ENCODE measurements at regions of chr17 and their contacts with region 1.

Region 1: DNA sequence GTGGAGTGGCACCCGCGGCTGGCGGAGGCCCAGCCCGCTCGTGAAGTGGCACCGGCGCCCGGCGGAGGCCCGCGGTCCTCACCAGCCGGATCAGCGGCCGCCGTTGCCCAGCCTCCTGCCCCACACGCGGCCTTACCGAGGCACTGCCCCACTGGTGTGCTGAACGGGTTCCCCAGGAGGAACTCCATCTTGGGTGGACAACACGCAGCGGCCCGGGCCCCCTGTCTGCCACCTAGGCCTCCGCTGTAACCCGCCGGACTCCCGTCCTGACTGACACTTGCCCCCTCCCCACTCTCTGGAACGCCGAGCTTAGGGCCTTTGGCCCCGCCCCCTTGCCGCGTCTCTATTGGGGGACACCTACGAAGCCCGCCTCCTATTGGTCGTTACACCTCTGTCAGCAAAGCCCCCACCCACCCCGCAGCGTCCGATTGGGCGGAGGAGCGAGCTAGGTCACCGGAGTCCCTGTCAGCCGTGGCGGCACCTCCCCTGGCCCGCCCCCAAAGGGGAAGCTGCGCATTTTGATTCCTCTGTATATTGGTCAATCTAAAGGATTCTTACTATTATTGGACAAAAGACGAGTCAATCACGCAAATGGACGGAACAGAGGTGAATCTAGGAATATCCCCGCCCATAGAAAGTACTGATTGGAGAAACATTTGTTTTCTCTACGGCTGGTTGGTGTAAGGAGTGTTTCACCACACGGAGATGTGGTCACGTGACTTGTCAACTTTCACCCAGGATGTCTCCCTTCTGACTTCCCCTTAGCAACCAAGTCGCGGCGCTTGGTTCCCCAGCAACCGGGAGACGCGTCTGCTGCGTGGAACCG is at the starts of genes DRC3 and TOM1L2:
- DNase-seq: peak; percentile 100
- H3K4me3 ChIP-seq: peak within 1 kb of the TSS; percentile 82
- H3K27ac ChIP-seq: peak within 1 kb of the TSS; percentile 40
- H3K4me1 ChIP-seq: peaks cover 28% of the 10 kb centered on the region
- H3K27me3 ChIP-seq: no peaks in the 10 kb centered on the region
- CTCF ChIP-seq: no peak
- total RNA-seq, gene DRC3: 7.2 and 15.2 TPM in 2 replicates
- total RNA-seq, gene TOM1L2: 68.5 and 71.8 TPM in 2 replicates

Region 2: GRCh38 chr17:17737961-17738894 is 234.1 kb before region 1 on chr17:
- CTCF ChIA-PET with region 1: no interaction called
- POLR2A ChIA-PET with region 1: interaction called, 10 read pairs
- intact Hi-C with region 1: no loop called
- DNase-seq: peak; percentile 68 to 94
- H3K4me3 ChIP-seq: peak overlapping the region; percentile 24; the same call in 1 of the 2 replicates
- H3K27ac ChIP-seq: peak overlapping the region; percentile 77
- H3K4me1 ChIP-seq: peaks cover 53% of the 10 kb centered on the region
- H3K27me3 ChIP-seq: no peaks in the 10 kb centered on the region
- CTCF ChIP-seq: no peak

Region 3: GRCh38 chr17:17890773-17891759 is 81.3 kb before region 1 on chr17:
- CTCF ChIA-PET with region 1: no interaction called
- POLR2A ChIA-PET with region 1: interaction called, 5 read pairs
- intact Hi-C with region 1: loop called (anchors 1 kb)
- DNase-seq: peak; percentile 57 to 71
- H3K4me3 ChIP-seq: no peak overlapping the region
- H3K27ac ChIP-seq: no peak overlapping the region
- H3K4me1 ChIP-seq: no peaks in the 10 kb centered on the region
- H3K27me3 ChIP-seq: no peaks in the 10 kb centered on the region
- CTCF ChIP-seq: peak; percentile 93

Region 4: DNA sequence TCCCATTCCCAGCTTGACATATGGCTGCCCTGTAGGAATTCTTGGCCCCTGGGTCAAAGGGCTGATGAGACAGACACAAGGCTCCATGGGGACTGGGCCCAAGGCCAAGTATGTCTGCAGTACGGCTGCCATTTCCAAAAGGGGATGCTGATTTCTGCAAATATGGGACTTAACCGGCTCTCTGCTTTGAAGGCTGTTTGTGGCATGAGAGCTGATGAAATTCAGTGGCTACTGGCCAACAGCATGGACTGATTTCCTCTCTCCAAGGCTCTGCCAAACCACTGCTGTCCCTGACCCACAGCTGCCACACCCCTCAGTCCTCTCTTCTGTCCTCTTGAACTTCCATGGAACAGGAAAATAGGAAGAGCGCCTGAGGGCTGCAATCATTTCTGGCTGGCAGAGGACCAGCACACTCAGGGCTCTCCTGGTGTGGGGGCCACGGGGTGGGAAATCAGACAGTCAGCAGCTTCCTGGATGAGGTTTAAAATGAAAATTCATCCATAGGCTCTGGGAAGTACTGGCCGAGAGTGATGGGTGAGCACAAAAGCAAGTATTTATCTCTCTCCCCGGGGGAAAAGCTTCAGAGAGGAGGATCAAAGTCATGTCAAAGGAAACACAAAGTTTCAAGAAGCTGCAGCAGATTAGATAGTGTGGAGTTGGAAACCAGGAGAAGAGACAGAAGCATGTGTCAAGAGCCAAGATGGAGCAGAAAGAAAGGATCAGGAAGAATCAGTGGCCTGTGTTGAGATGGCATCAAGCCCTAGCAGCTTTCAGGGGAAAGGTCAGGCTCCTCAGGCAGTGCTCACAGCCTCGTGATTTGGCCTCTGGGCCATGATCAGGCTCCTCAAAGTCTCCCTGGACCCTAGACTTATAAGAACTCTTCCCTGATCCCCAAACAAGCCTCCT is 71.5 kb before region 1 on chr17:
- CTCF ChIA-PET with region 1: no interaction called
- POLR2A ChIA-PET with region 1: no interaction called
- intact Hi-C with region 1: loop called (anchors 2 kb)
- DNase-seq: peak; percentile 85
- H3K4me3 ChIP-seq: no peak overlapping the region
- H3K27ac ChIP-seq: peak overlapping the region; percentile 63
- H3K4me1 ChIP-seq: peaks cover 36% of the 10 kb centered on the region
- H3K27me3 ChIP-seq: no peaks in the 10 kb centered on the region
- CTCF ChIP-seq: no peak

Region 5: GRCh38 chr17:17994271-17995069 is 22.1 kb after region 1 on chr17:
- CTCF ChIA-PET with region 1: no interaction called
- POLR2A ChIA-PET with region 1: no interaction called
- intact Hi-C with region 1: loop called (anchors 1 kb)
- DNase-seq: no peak
- H3K4me3 ChIP-seq: no peak overlapping the region
- H3K27ac ChIP-seq: no peak overlapping the region
- H3K4me1 ChIP-seq: peaks cover 22% of the 10 kb centered on the region
- H3K27me3 ChIP-seq: no peaks in the 10 kb centered on the region
- CTCF ChIP-seq: peak; percentile 31; the same call in 1 of the 2 replicates

Region 6: DNA sequence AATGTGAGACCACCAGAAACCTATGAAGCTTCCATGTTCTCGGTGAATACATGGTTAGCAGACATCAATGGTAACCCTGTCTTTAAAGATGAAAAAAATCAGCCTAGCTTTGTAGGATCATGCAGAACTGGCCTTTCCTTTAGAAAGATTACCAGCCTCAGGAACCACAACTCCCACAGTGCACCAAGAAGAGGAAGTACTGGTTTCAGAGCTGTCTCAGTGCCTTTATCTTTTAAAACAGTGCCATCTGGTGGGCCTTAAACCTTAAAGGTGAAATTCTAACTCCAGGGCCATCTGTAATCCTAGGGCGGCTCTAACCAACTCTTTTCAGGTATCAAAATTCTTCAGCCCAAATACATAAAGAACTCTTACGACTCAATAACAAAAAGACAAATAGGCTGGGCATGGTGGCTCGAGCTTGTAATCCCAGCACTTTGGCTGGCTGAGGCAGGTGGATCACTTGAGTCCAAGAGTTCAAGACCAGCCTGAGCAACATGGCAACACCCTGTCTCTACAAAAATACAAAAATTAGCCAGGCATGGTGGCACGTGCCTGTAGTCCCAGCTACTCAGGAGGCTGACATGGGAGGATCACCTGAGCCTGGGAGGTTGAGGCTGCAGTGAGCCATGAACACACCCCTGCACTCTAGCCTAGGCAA is 61.2 kb after region 1 on chr17:
- CTCF ChIA-PET with region 1: interaction called, 13 read pairs
- POLR2A ChIA-PET with region 1: interaction called, 4 read pairs
- intact Hi-C with region 1: loop called (anchors 2 kb)
- DNase-seq: peak; percentile 54 to 82
- H3K4me3 ChIP-seq: no peak overlapping the region
- H3K27ac ChIP-seq: no peak overlapping the region
- H3K4me1 ChIP-seq: peaks cover 30% of the 10 kb centered on the region
- H3K27me3 ChIP-seq: no peaks in the 10 kb centered on the region
- CTCF ChIP-seq: peak; percentile 89

Region 7: GRCh38 chr17:18076936-18077335 is 104.6 kb after region 1 on chr17:
- CTCF ChIA-PET with region 1: no interaction called
- POLR2A ChIA-PET with region 1: no interaction called
- intact Hi-C with region 1: no loop called
- DNase-seq: no peak
- H3K4me3 ChIP-seq: no peak overlapping the region
- H3K27ac ChIP-seq: no peak overlapping the region
- H3K4me1 ChIP-seq: no peaks in the 10 kb centered on the region
- H3K27me3 ChIP-seq: no peaks in the 10 kb centered on the region
- CTCF ChIP-seq: no peak

Measured in PC-9 (cell line).